ENCODE measurements at regions of chr15 and their contacts with region 1.

Region 1: GRCh38 chr15:93631958-93632618 is 543.1 kb upstream of the RGMA start:
- DNase-seq: no peak
- ATAC-seq: no peak
- H3K4me3 ChIP-seq: no peak overlapping the region
- H3K27ac ChIP-seq: no peak overlapping the region
- H3K4me1 ChIP-seq: no peaks in the 10 kb centered on the region
- H3K27me3 ChIP-seq: no peaks in the 10 kb centered on the region
- CTCF ChIP-seq: no peak
- POLR2A ChIP-seq: no peak

Region 2: DNA sequence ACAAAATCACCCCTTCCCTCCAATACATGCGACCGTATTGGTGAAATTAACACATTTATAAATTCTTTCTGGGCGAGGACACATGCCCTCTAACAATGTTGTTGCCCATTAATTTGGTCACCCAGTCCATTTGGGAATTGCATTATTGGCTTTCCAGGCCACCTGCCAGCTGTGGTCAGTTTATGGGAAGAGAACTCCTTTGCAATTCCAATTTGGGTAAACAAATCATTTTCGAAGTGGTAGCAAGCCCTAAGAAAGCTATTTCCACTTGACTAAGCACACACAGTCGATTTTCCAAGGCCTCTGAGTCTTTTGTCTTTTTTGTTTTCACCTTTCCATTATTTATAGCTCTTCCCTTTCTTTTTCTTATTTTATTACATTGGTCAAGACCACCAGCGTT is 180.8 kb before region 1 on chr15:
- intact Hi-C with region 1: no loop called
- DNase-seq: no peak
- ATAC-seq: no peak
- H3K4me3 ChIP-seq: no peak overlapping the region
- H3K27ac ChIP-seq: no peak overlapping the region
- H3K4me1 ChIP-seq: peaks cover 0 to 14% (median 0%) of the 10 kb centered on the region in 12 donors
- H3K27me3 ChIP-seq: no peaks in the 10 kb centered on the region
- CTCF ChIP-seq: no peak
- POLR2A ChIP-seq: no peak

Region 3: GRCh38 chr15:93664213-93664956 is 32.3 kb after region 1 on chr15:
- intact Hi-C with region 1: no loop called
- DNase-seq: no peak
- ATAC-seq: peak in 3 of 4 donors; percentile 41 to 67 (median 65)
- H3K4me3 ChIP-seq: no peak overlapping the region
- H3K27ac ChIP-seq: peak overlapping the region in 2 of 12 donors; percentile 23 to 61
- H3K4me1 ChIP-seq: no peaks in the 10 kb centered on the region
- H3K27me3 ChIP-seq: no peaks in the 10 kb centered on the region
- CTCF ChIP-seq: no peak
- POLR2A ChIP-seq: no peak

Region 4: DNA sequence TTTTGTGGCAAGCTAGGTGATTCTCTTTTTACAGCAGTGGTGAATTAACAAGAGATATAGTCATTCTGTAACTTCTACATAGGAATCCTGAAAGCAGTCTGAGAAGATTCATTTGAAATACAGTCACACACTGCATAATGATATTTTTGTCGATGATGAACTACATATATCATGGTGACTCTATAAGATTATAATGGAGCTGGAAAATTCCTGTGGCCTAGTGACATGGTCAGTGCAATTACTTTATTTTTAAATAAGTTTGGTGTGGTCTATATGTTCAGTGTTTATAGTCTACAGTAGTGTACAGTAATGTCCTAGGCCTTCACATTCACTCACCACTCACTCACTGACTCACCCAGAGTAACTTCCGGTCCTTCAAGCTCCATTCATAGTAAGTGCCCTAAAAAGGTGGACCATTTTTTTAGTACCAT is 87.8 kb after region 1 on chr15:
- intact Hi-C with region 1: loop called in 1 of 10 experiments (anchors 10 kb)
- DNase-seq: no peak
- ATAC-seq: no peak
- H3K4me3 ChIP-seq: no peak overlapping the region
- H3K27ac ChIP-seq: no peak overlapping the region
- H3K4me1 ChIP-seq: no peaks in the 10 kb centered on the region
- H3K27me3 ChIP-seq: no peaks in the 10 kb centered on the region
- CTCF ChIP-seq: no peak
- POLR2A ChIP-seq: no peak

Measured in heart left ventricle (tissue), 16 donors.